Breast epithelium (tissue), 4 donors: ENCODE measurements at regions of chr17 and their contacts with region 1.

Region 1: DNA sequence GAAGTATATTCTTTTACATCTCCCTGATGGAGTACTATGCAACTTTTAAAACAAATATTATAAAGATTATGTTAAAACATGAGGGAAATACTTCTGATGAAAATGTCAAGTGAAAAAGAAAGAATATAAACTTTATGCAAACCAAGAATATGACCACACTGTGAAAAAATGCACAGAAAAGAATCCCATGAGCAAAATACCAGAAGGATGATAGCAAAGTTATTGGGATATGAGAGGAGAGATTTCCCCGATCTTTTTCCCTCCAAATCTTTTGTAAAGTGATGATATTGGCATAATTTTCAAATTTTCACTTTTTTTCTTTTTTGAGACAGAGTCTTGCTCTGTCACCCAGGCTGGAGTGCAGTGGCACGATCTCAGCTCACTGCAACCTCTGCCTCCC is 36.6 kb upstream of the SMURF2 start:
- DNase-seq: no peak
- H3K4me3 ChIP-seq: no peak overlapping the region
- H3K27ac ChIP-seq: no peak overlapping the region
- H3K4me1 ChIP-seq: no peaks in the 10 kb centered on the region
- H3K27me3 ChIP-seq: no peaks in the 10 kb centered on the region
- CTCF ChIP-seq: no peak
- POLR2A ChIP-seq: no peak

Region 2: GRCh38 chr17:63919311-63919723 is 779.4 kb before region 1 on chr17:
- intact Hi-C with region 1: loop called (anchors 5 kb)
- DNase-seq: peak in 1 of 2 donors; percentile 43
- H3K4me3 ChIP-seq: no peak overlapping the region
- H3K27ac ChIP-seq: no peak overlapping the region
- H3K4me1 ChIP-seq: no peaks in the 10 kb centered on the region
- H3K27me3 ChIP-seq: no peaks in the 10 kb centered on the region
- CTCF ChIP-seq: peak; percentile 80 to 94 (median 93)
- POLR2A ChIP-seq: no peak

Region 3: GRCh38 chr17:64608540-64608981 is 90.2 kb before region 1 on chr17:
- intact Hi-C with region 1: no loop called
- DNase-seq: no peak
- H3K4me3 ChIP-seq: no peak overlapping the region
- H3K27ac ChIP-seq: no peak overlapping the region
- H3K4me1 ChIP-seq: no peaks in the 10 kb centered on the region
- H3K27me3 ChIP-seq: no peaks in the 10 kb centered on the region
- CTCF ChIP-seq: no peak
- POLR2A ChIP-seq: no peak